Breast epithelium (tissue), 4 donors: ENCODE measurements at regions of chr12 and their contacts with region 1.

Region 1: DNA sequence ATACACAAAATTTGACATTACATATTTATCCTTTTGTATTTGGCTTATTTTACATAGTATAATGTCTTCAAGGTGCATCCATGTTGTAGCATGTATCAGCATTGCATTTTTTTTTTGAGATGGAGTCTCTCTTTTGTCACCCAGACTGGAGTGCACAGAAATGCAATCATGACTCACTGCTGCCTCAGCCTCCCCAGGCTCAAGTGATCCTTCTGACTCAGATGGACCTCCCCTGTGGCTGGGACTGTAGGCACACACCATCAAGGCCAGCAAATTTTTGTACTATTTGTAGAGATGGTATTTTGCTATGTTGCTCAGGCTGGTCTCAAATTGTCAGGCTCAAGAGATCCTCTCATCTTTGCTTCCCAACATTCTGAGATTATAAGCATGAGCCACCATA is 214.4 kb upstream of the ALG10B start:
- DNase-seq: no peak
- H3K4me3 ChIP-seq: no peak overlapping the region
- H3K27ac ChIP-seq: no peak overlapping the region
- H3K4me1 ChIP-seq: no peaks in the 10 kb centered on the region
- H3K27me3 ChIP-seq: no peaks in the 10 kb centered on the region
- CTCF ChIP-seq: no peak
- POLR2A ChIP-seq: no peak

Region 2: DNA sequence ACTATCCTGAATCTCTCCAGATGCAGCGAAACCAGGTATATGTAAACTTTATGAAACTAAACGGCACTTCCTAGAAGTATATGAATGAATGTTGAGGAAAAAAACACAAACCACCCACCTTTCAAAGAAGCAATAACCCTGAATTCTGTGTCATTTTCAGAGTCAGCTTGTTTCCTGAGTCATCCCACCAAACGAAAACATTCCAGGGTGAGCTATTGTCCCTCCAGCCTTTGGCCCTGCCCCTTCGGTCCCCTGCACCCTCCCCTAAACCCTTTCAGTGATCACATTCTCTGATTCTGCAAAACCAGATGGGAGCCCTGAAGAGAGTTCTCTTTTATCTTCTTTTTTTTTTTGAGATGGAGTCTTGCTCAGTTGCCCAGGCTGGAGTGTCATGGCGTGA is 11.8 kb after region 1 on chr12:
- intact Hi-C with region 1: loop called (anchors 1 kb)
- DNase-seq: no peak
- H3K4me3 ChIP-seq: no peak overlapping the region
- H3K27ac ChIP-seq: no peak overlapping the region
- H3K4me1 ChIP-seq: no peaks in the 10 kb centered on the region
- H3K27me3 ChIP-seq: no peaks in the 10 kb centered on the region
- CTCF ChIP-seq: no peak
- POLR2A ChIP-seq: no peak